ENCODE measurements at regions of chr3 and their contacts with region 1.

Region 1: GRCh38 chr3:9843715-9844438 is at the start of gene RPUSD3:
- DNase-seq: peak; percentile 79 to 98 (median 92)
- ATAC-seq: peak; percentile 99 to 100 (median 99)
- H3K4me3 ChIP-seq: peak within 1 kb of the TSS; percentile 81 to 95
- H3K4me3 Mint-ChIP-seq: peak within 1 kb of the TSS; percentile 98 to 100 (median 98)
- H3K27ac ChIP-seq: peak within 1 kb of the TSS; percentile 60
- H3K27ac Mint-ChIP-seq: peak within 1 kb of the TSS; percentile 91 to 93
- H3K4me1 ChIP-seq: peaks cover 7 to 25% of the 10 kb centered on the region in 2 experiments
- H3K4me1 Mint-ChIP-seq: peaks cover 23 to 31% (median 30%) of the 10 kb centered on the region in 3 donors
- H3K27me3 ChIP-seq: no peaks in the 10 kb centered on the region
- H3K27me3 Mint-ChIP-seq: no peaks in the 10 kb centered on the region
- total RNA-seq, gene RPUSD3: 23.6 to 70.5 (median 64.7) TPM

Region 2: DNA sequence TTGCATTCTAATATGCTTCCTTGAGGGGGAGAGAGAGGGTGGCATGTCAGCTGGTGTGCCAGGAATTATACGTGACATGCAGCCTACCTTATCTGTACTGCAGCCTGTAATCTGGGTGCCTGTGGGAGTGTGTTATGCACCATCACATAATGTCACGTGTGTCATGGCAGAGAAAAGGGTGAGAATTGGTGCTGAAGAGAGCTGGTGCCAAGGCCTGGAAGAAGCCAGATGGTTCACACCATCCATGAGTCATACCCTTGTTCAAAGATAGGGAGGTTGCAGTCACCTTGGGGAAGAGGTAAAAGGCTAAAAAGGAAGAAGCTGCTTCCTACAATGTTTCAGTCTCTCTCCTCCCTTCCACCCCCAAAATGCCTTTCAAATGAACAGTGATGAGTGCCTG is 107.0 kb before region 1 on chr3:
- CTCF ChIA-PET with region 1: no interaction called
- POLR2A ChIA-PET with region 1: no interaction called
- DNase-seq: no peak
- ATAC-seq: no peak
- H3K4me3 ChIP-seq: no peak overlapping the region
- H3K4me3 Mint-ChIP-seq: no peak overlapping the region
- H3K27ac ChIP-seq: no peak overlapping the region
- H3K27ac Mint-ChIP-seq: peak overlapping the region in 1 of 2 donors; percentile 41
- H3K4me1 ChIP-seq: peaks cover 5 to 36% of the 10 kb centered on the region in 2 experiments
- H3K4me1 Mint-ChIP-seq: peaks cover 38 to 48% (median 46%) of the 10 kb centered on the region in 3 donors
- H3K27me3 ChIP-seq: no peaks in the 10 kb centered on the region
- H3K27me3 Mint-ChIP-seq: no peaks in the 10 kb centered on the region

Region 3: DNA sequence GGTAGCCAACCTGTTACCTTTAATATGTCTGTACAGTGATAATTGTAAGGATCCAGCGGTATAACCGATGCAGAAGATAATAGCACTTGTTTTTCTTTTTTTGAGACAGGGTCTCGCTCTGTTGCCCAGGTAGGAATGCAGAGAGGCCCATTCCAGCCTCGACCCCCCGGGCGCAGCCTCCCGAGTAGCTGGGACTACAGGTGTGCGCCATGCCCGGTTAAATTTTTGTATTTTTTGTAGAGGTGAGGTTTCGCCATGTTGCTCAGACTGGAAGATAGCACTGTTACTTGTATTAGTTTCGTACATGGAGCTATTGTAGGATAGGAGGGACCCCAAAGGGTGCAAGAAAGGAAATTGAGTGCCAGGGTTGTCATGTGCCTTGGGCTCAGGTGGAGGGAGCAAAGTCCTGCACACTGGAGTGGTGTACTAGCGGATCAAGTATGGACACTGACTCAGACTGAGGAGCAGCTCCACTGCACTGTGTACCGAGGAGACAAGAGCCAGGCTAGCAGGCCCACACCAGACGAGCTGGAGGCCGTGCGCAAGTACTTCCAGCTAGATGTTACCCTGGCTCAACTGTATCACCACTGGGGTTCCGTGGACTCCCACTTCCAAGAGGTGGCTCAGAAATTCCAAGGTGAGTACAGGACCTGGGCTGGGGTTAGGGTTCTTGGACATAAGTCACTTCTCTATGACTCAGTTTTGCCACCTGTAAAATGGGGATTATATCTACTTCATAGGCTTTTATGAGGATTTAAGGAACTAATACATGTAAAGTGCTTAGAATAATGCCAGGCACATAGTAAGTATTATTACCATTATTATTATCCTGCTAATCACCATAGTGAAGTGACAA is 93.1 kb before region 1 on chr3:
- CTCF ChIA-PET with region 1: interaction called in 1 of 2 experiments, 15 read pairs
- POLR2A ChIA-PET with region 1: no interaction called
- DNase-seq: no peak
- ATAC-seq: no peak
- H3K4me3 ChIP-seq: peak overlapping the region; percentile 70 to 88
- H3K4me3 Mint-ChIP-seq: peak overlapping the region; percentile 95 to 96 (median 95)
- H3K27ac ChIP-seq: peak overlapping the region; percentile 50
- H3K27ac Mint-ChIP-seq: peak overlapping the region; percentile 96 to 97
- H3K4me1 ChIP-seq: peaks cover 19 to 42% of the 10 kb centered on the region in 2 experiments
- H3K4me1 Mint-ChIP-seq: peaks cover 50 to 52% (median 51%) of the 10 kb centered on the region in 3 donors
- H3K27me3 ChIP-seq: no peaks in the 10 kb centered on the region
- H3K27me3 Mint-ChIP-seq: no peaks in the 10 kb centered on the region

Region 4: GRCh38 chr3:9826815-9827567 is 16.9 kb before region 1 on chr3:
- CTCF ChIA-PET with region 1: interaction called in 1 of 2 experiments, 10 read pairs
- POLR2A ChIA-PET with region 1: interaction called in 1 of 2 experiments, 5 read pairs
- DNase-seq: peak in 4 of 35 experiments; percentile 9 to 37 (median 10)
- ATAC-seq: peak in 3 of 4 experiments; percentile 48 to 56 (median 50)
- H3K4me3 ChIP-seq: no peak overlapping the region
- H3K4me3 Mint-ChIP-seq: no peak overlapping the region
- H3K27ac ChIP-seq: no peak overlapping the region
- H3K27ac Mint-ChIP-seq: no peak overlapping the region
- H3K4me1 ChIP-seq: no peaks in the 10 kb centered on the region
- H3K4me1 Mint-ChIP-seq: peaks cover 7 to 14% (median 9%) of the 10 kb centered on the region in 3 donors
- H3K27me3 ChIP-seq: no peaks in the 10 kb centered on the region
- H3K27me3 Mint-ChIP-seq: no peaks in the 10 kb centered on the region

Region 5: DNA sequence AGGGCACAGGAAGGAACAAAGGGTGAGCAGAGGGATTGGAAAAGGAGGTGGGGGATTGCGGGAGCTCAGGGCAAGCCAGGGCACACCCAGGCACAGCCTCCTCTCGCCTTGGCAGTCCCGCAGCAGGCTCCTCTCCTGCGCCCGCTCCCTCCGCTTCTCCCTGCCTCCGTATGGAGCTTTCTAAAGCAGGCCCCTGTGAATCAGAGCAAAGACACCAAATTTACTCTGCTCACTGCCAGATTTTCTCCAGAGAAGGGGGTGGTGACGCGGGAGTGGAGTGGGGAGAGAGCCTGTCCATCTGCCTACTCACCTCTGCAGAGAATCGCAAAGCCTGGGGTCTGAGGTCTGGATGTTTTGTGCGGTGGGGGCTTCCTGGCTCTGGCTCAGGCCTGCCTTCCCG is 641.5 kb after region 1 on chr3:
- CTCF ChIA-PET with region 1: no interaction called
- POLR2A ChIA-PET with region 1: no interaction called
- DNase-seq: no peak
- ATAC-seq: no peak
- H3K4me3 ChIP-seq: no peak overlapping the region
- H3K4me3 Mint-ChIP-seq: no peak overlapping the region
- H3K27ac ChIP-seq: no peak overlapping the region
- H3K27ac Mint-ChIP-seq: no peak overlapping the region
- H3K4me1 ChIP-seq: no peaks in the 10 kb centered on the region
- H3K4me1 Mint-ChIP-seq: no peaks in the 10 kb centered on the region
- H3K27me3 ChIP-seq: peaks cover 0 to 8% of the 10 kb centered on the region in 2 experiments
- H3K27me3 Mint-ChIP-seq: no peaks in the 10 kb centered on the region